Calu3 (cell line): ENCODE measurements at regions of chr2 and their contacts with region 1.

Region 1: DNA sequence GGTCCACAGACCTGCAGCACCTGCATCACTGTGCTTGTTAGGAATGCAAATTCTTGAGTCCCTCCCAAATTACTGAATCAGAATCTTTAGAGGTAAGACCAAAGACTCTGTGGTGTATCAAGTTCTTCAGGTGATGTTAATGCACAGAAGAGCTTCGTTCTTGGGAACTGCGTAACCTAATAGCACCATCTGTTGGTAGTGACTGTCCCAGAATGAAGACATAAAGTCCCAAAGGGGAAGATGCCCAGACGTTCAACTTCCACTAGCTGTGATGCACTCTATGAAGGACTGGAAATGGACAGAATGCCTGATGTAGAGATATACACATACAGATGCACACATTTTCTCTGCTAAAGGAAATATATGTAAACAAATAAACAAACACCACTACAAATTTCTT is 576.0 kb downstream of the LRP1B start:
- DNase-seq: peak; percentile 40
- H3K4me3 Mint-ChIP-seq: no peak overlapping the region
- H3K27ac Mint-ChIP-seq: no peak overlapping the region
- H3K4me1 Mint-ChIP-seq: peaks cover 38% of the 10 kb centered on the region
- H3K27me3 Mint-ChIP-seq: no peaks in the 10 kb centered on the region
- CTCF ChIP-seq: no peak

Region 2: DNA sequence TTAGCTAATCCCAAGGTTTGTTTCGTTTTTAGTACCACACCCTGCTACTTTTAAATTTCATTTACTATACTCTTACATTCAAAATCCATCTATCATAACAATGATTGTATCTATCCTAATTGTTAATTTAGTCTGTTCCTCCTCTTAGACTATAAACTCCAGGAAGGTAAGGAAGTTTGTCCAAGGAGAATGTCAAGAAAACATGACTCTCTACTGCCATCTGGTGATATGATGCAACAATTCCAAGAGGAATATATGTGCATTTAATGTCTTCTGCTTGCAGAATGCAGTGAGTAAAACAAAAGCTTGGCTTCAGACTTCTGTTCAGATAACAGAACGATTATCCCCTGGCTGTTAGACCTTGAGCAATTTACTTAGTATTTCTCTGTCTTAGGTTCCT is 691.1 kb before region 1 on chr2:
- CTCF ChIA-PET with region 1: interaction called, 7 read pairs
- intact Hi-C with region 1: loop called (anchors 10 kb)
- DNase-seq: peak; percentile 6
- H3K4me3 Mint-ChIP-seq: no peak overlapping the region
- H3K27ac Mint-ChIP-seq: peak overlapping the region; percentile 42
- H3K4me1 Mint-ChIP-seq: peaks cover 9% of the 10 kb centered on the region
- H3K27me3 Mint-ChIP-seq: no peaks in the 10 kb centered on the region
- CTCF ChIP-seq: peak; percentile 36

Region 3: DNA sequence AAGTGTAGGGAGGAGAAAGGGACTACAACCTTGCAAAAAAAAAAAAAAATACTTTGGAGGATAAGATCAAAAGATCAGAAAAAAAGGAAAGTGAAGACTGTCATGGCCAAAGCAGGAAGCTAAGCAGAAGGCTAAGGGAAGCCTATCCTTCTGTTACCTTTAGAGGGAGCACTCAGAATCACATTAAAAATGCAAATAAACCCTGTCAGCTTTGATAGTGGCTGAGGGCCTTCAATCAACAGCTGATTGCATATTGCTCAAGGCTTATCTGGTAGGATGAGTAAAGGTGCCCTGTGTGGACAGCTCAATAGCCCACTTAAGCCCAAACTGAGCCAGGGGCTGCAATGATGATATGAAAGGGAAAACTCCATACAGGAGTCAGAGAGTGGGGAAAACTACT is 445.2 kb before region 1 on chr2:
- CTCF ChIA-PET with region 1: no interaction called
- intact Hi-C with region 1: loop called (anchors 10 kb)
- DNase-seq: no peak
- H3K4me3 Mint-ChIP-seq: no peak overlapping the region
- H3K27ac Mint-ChIP-seq: no peak overlapping the region
- H3K4me1 Mint-ChIP-seq: peaks cover 13% of the 10 kb centered on the region
- H3K27me3 Mint-ChIP-seq: no peaks in the 10 kb centered on the region
- CTCF ChIP-seq: peak; percentile 16

Region 4: GRCh38 chr2:141271346-141271745 is 283.5 kb before region 1 on chr2:
- CTCF ChIA-PET with region 1: no interaction called
- intact Hi-C with region 1: no loop called
- DNase-seq: no peak
- H3K4me3 Mint-ChIP-seq: no peak overlapping the region
- H3K27ac Mint-ChIP-seq: no peak overlapping the region
- H3K4me1 Mint-ChIP-seq: no peaks in the 10 kb centered on the region
- H3K27me3 Mint-ChIP-seq: no peaks in the 10 kb centered on the region
- CTCF ChIP-seq: no peak

Region 5: GRCh38 chr2:141362311-141362710 is 192.5 kb before region 1 on chr2:
- CTCF ChIA-PET with region 1: no interaction called
- intact Hi-C with region 1: no loop called
- DNase-seq: no peak
- H3K4me3 Mint-ChIP-seq: no peak overlapping the region
- H3K27ac Mint-ChIP-seq: no peak overlapping the region
- H3K4me1 Mint-ChIP-seq: no peaks in the 10 kb centered on the region
- H3K27me3 Mint-ChIP-seq: no peaks in the 10 kb centered on the region
- CTCF ChIP-seq: no peak

Region 6: GRCh38 chr2:141399270-141399669 is 155.5 kb before region 1 on chr2:
- CTCF ChIA-PET with region 1: no interaction called
- intact Hi-C with region 1: loop called (anchors 5 kb)
- DNase-seq: peak; percentile 16
- H3K4me3 Mint-ChIP-seq: no peak overlapping the region
- H3K27ac Mint-ChIP-seq: no peak overlapping the region
- H3K4me1 Mint-ChIP-seq: no peaks in the 10 kb centered on the region
- H3K27me3 Mint-ChIP-seq: no peaks in the 10 kb centered on the region
- CTCF ChIP-seq: no peak

Region 7: DNA sequence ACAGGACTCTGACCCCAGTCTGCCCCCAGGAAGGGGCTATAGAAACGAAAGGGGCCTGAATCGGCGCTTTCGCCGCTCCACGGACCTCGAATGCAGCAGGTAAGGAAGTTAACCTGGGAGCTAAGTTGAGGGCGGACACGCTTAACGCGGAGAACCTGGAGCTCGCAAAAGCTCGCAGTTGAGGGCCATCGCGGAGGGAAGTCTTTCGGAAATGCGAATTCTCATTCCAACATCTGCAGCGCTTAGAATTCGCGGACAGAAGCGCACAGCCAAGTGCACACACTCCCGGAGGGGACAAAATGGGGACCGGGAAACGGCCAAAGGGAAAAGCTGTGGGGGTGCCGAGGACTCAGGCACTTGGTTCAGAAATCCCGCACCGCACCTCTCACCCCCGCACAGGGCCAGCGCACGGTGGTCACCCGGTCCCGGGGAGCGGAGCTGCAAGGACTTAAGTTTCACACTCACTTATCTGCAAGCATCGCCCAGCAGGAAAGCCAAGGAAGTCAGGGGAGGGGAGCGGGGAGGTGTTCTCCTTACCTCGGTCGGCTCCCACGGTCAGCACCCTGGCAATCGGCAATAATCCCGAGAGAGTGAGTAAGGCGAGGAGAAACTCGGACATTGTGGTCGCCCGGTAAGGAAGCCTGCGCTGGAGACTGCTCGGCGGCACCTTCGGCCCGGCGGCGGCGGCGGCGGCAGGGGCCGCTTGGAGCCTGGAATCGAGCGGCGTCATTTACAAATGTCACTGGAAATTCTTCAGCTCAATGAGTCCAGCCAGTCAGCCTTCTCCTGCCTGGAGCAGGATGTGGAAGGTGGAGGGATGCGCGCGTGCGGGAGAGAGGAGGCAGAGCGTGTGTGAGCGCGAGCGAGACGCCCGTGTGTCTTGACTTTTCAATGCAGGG is 575.5 kb after region 1 on chr2:
- CTCF ChIA-PET with region 1: no interaction called
- intact Hi-C with region 1: loop called (anchors 5 kb)
- DNase-seq: peak; percentile 26
- H3K4me3 Mint-ChIP-seq: peak overlapping the region; percentile 87
- H3K27ac Mint-ChIP-seq: peak overlapping the region; percentile 11
- H3K4me1 Mint-ChIP-seq: peaks cover 8% of the 10 kb centered on the region
- H3K27me3 Mint-ChIP-seq: no peaks in the 10 kb centered on the region
- CTCF ChIP-seq: no peak